ENCODE measurements at regions of chr15 and their contacts with region 1.

Region 1: GRCh38 chr15:38563723-38564519 is 693 bp downstream of the RASGRP1 start:
- DNase-seq: peak; percentile 74
- ATAC-seq: peak; percentile 62
- H3K4me3 Mint-ChIP-seq: peak overlapping the region; percentile 66
- H3K27ac Mint-ChIP-seq: no peak overlapping the region
- H3K4me1 Mint-ChIP-seq: peaks cover 15% of the 10 kb centered on the region
- H3K27me3 Mint-ChIP-seq: peaks cover 37% of the 10 kb centered on the region
- CTCF ChIP-seq: peak; percentile 92

Region 2: DNA sequence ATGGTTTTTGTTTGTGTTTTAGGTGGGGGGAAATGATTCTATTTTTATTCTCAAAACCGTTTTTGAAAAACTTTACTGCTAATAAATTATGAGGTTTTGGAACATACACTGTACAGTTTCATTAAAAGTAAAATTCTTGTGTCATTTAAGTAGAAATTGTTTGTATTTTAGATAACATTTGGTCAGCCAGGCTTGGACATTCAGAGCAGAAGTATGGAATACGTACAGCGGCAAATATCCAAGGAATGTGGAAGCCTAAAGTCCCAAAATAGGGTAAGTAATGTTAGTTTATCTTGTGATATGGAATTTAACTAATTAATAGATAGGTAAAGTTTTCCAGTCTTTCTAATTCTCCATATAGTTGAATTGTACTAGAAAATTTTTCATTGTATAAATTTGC is 214.7 kb before region 1 on chr15:
- CTCF ChIA-PET with region 1: no interaction called
- POLR2A ChIA-PET with region 1: no interaction called
- DNase-seq: no peak
- ATAC-seq: no peak
- H3K4me3 Mint-ChIP-seq: no peak overlapping the region
- H3K27ac Mint-ChIP-seq: no peak overlapping the region
- H3K4me1 Mint-ChIP-seq: peaks cover 2% of the 10 kb centered on the region
- H3K27me3 Mint-ChIP-seq: no peaks in the 10 kb centered on the region
- CTCF ChIP-seq: no peak

Region 3: GRCh38 chr15:38453971-38454695 is 109.8 kb before region 1 on chr15 and contains the start of gene FAM98B:
- CTCF ChIA-PET with region 1: interaction called, 16 read pairs
- POLR2A ChIA-PET with region 1: interaction called, 5 read pairs
- DNase-seq: peak; percentile 92
- ATAC-seq: peak; percentile 96
- H3K4me3 Mint-ChIP-seq: peak within 1 kb of the TSS; percentile 93
- H3K27ac Mint-ChIP-seq: peak within 1 kb of the TSS; percentile 96
- H3K4me1 Mint-ChIP-seq: peaks cover 13% of the 10 kb centered on the region
- H3K27me3 Mint-ChIP-seq: no peaks in the 10 kb centered on the region; the same call in 1 of the 2 replicates
- CTCF ChIP-seq: no peak
- total RNA-seq, gene FAM98B: 38.1 to 46.6 TPM (median 38.5 TPM) in 3 replicates

Region 4: GRCh38 chr15:38514601-38515000 is 49.3 kb before region 1 on chr15:
- CTCF ChIA-PET with region 1: interaction called, 20 read pairs
- POLR2A ChIA-PET with region 1: no interaction called
- DNase-seq: no peak
- ATAC-seq: peak; percentile 70
- H3K4me3 Mint-ChIP-seq: no peak overlapping the region
- H3K27ac Mint-ChIP-seq: peak overlapping the region; percentile 37; the same call in 1 of the 2 replicates
- H3K4me1 Mint-ChIP-seq: peaks cover 41% of the 10 kb centered on the region
- H3K27me3 Mint-ChIP-seq: no peaks in the 10 kb centered on the region
- CTCF ChIP-seq: no peak

Region 5: GRCh38 chr15:38589502-38589901 is 25.6 kb after region 1 on chr15:
- CTCF ChIA-PET with region 1: interaction called, 19 read pairs
- POLR2A ChIA-PET with region 1: no interaction called
- DNase-seq: no peak
- ATAC-seq: no peak
- H3K4me3 Mint-ChIP-seq: no peak overlapping the region
- H3K27ac Mint-ChIP-seq: no peak overlapping the region
- H3K4me1 Mint-ChIP-seq: no peaks in the 10 kb centered on the region
- H3K27me3 Mint-ChIP-seq: peaks cover 5% of the 10 kb centered on the region
- CTCF ChIP-seq: no peak

Region 6: DNA sequence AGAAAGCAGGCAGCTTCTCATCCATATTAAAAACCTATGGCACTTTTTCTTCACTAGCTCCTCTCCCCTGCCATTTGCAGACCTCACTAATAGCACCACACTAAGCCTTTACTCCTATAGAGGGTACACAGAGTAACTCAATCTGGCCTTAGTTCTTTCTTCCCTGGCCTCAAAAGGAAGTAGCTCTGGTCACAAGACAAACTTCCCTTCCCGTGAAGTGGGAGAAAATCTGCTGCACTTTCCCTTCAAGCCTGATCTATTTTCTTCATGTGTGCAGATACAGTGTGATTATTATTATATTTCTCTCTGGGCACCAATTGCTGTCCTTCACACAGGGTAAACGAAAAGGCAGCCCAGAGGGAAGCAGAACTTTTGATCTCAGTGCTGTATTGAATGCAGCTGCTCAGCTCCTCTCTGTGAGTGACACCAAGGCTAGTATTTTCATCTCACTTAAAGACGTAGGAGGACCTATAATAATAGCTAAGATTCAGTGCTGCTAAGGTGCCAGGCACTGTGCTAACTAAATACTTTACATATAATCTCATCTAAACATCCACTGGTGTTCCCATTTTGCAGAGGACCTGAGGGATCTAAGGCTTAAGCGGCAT is 62.6 kb after region 1 on chr15:
- CTCF ChIA-PET with region 1: interaction called, 12 read pairs
- POLR2A ChIA-PET with region 1: no interaction called
- DNase-seq: no peak
- ATAC-seq: no peak
- H3K4me3 Mint-ChIP-seq: no peak overlapping the region
- H3K27ac Mint-ChIP-seq: no peak overlapping the region
- H3K4me1 Mint-ChIP-seq: 0 out of 2 replicates have a peak, but pooled peaks cover 2% of the 10 kb centered on the region
- H3K27me3 Mint-ChIP-seq: no peaks in the 10 kb centered on the region; the same call in none of the 2 replicates
- CTCF ChIP-seq: no peak

Region 7: GRCh38 chr15:38683382-38684242 is 119.7 kb after region 1 on chr15:
- CTCF ChIA-PET with region 1: interaction called, 93 read pairs
- POLR2A ChIA-PET with region 1: no interaction called
- DNase-seq: peak; percentile 65
- ATAC-seq: peak; percentile 94
- H3K4me3 Mint-ChIP-seq: no peak overlapping the region
- H3K27ac Mint-ChIP-seq: no peak overlapping the region
- H3K4me1 Mint-ChIP-seq: peaks cover 8% of the 10 kb centered on the region
- H3K27me3 Mint-ChIP-seq: no peaks in the 10 kb centered on the region; the same call in 1 of the 2 replicates
- CTCF ChIP-seq: peak; percentile 70

Measured in WTC11 (cell line).